Activated CD4-positive, alpha-beta T cell treated with anti-CD3 and anti-CD28 coated beads, Interleukin-2, amount 10 ng/mL, durations not matched to agents 24 days and 14 days (primary cell): ENCODE measurements at regions of chr1 and their contacts with region 1.

Region 1: DNA sequence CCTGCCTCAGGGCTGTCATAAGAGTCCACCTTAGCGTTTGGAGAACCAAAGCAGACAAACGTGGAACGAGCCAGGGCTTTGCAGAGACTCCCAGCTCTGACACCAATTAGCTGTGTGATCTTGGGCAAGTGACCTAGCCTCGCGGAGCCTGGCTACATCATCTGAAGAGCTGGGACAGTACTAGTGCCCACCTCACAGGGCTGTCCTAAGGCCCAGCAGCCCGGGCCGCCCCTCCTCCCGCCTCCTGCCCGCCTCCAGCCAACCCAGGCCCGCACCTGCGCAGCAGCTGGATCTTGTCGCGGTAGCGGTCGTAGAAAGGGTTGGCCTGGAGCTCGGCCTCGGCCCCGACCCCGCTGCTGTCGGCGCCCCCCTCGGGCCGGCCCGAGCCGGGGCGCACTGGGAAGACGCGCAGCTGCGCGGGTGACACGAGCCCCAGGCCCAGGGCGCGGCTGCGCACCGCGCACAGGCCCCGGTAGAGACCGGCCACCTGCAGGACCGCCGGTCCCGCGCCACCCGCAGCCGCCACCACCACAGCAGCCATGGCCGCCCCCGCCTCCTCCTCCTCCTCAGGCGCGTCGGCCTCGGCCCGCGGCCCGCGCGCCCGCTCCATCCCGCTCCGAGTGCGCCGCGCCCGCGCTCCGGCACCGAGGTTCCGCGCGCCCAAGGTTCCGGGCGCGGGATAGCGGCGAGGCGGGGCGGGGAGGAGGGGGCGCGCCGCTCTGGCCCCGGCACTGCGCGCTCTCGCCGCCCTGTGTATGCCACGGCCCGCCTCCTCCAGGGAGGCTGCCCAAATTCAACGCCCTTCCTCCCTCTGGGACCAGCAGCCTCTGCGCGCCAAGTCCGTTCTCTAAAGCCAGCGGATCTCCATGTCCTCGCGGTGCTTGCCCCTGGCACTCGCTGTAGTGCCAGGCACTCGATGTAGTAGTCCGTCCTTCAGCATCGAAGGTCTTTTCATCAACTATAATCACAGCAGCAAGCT is at the start of gene ATPAF1:
- DNase-seq: peak; percentile 90
- H3K4me3 Mint-ChIP-seq: peak within 1 kb of the TSS; percentile 88
- H3K27ac Mint-ChIP-seq: peak within 1 kb of the TSS; percentile 59
- H3K4me1 Mint-ChIP-seq: peaks cover 18% of the 10 kb centered on the region
- H3K27me3 Mint-ChIP-seq: no peaks in the 10 kb centered on the region
- total RNA-seq, gene ATPAF1: 41.6 and 43.1 TPM in 2 replicates

Region 2: GRCh38 chr1:46616277-46617107 is 51.6 kb before region 1 on chr1 and contains the start of gene MOB3C:
- intact Hi-C with region 1: loop called (anchors 2 kb)
- DNase-seq: peak; percentile 91
- H3K4me3 Mint-ChIP-seq: peak within 1 kb of the TSS; percentile 94
- H3K27ac Mint-ChIP-seq: peak within 1 kb of the TSS; percentile 90
- H3K4me1 Mint-ChIP-seq: peaks cover 55% of the 10 kb centered on the region
- H3K27me3 Mint-ChIP-seq: no peaks in the 10 kb centered on the region
- total RNA-seq, gene MOB3C: 15.0 and 17.8 TPM in 2 replicates

Region 3: DNA sequence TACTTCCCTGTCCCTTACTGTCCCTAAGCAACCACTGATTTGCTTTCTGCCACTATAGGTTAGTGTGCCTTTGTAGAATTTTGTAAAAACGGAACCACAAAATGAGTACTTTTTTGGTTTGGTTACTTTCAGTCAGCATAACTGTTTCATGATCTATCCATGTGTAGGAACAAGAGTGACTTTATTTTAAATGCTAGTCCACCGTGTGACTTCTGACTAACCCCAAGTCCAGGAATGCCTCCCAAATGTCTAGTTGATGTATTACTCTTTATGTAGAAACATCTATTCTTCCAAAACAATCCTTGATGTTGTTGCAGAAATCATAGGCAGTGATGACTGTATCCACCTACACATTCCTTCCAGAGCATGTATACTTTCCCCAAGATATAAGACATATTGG is 21.2 kb before region 1 on chr1:
- intact Hi-C with region 1: loop called (anchors 2 kb)
- DNase-seq: no peak
- H3K4me3 Mint-ChIP-seq: no peak overlapping the region
- H3K27ac Mint-ChIP-seq: no peak overlapping the region
- H3K4me1 Mint-ChIP-seq: peaks cover 4% of the 10 kb centered on the region
- H3K27me3 Mint-ChIP-seq: no peaks in the 10 kb centered on the region